Activated CD8-positive, alpha-beta memory T cell treated with anti-CD3 and anti-CD28 coated beads, Interleukin-2, amount 10 ng/mL, durations not matched to agents 7 days and 5 days (primary cell): ENCODE measurements at regions of chr14 and their contacts with region 1.

Region 1: DNA sequence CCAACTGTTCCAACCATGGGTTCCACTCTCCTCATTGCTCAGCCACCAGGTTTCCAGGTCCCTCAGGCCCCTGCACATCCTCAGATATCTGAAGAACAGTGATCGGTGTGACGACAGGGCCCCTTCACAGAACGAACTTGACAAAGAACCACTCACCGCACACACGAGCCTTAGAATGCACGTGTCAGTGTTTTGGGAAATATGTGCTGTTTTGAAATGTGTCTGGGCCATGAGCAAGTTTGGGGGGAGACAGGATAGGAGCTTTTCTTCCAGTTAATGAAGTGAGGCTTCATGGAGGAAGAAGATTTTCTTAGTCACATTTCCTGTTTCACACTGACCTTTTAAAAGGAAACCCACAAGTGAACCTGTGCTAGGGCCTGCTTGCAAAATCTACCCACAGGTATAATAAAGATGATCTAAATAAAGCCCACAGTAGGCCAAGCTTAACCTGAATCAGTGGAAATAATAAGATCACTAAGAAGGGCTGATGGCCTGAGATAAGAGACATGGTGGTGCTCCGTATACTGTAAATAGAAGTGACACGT is 58.6 kb downstream of the ZFP36L1 start:
- DNase-seq: peak; percentile 69
- ATAC-seq: peak; percentile 81
- H3K4me3 Mint-ChIP-seq: no peak overlapping the region
- H3K27ac Mint-ChIP-seq: peak overlapping the region; percentile 81
- H3K4me1 Mint-ChIP-seq: peaks cover 31% of the 10 kb centered on the region
- H3K27me3 Mint-ChIP-seq: no peaks in the 10 kb centered on the region

Region 2: DNA sequence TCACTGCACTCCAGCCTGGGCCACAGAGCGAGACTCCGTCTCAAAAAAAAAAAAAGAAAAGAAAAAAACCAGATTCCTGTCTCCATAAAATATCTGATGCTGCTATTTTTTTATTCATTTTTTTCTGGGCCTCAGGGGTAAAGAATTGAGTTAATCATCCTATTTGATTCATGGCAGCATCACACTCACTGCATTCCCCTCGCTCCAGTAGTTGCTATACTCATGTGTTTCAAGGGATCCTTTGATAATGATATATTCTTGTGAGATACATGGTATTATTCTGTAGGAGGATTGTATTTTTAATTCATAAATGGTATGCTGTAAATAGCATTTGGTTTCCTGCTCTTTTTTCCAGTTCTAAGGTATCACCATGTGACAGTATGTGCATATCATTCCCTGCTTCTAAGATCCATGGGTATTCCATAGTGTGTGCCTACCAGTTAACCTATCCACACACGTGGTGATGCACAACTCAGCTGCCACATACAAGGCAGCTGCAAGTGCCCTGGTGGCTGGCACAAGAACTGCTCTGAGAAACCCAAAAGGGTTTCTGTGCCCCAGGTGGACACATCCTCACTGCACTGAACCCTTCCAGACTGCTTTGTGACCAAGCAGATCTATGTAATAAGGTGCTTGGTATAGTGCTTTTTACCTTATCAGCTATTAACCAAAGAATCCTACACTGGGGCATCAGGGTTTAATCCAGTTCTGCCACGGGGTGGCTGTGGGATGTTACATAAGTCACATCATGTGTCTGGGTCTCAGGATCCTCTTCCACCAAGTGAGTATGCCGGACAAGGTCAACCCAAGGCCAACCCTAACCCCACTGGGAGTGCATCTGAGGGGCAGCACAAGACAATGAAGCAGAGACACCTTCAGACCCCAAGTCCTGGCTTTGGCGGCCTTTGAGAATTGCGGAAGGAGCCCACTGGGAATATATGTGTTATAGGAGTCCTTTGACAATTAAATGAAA is 16.0 kb before region 1 on chr14:
- CTCF ChIA-PET with region 1: interaction called, 13 read pairs
- DNase-seq: no peak
- ATAC-seq: no peak
- H3K4me3 Mint-ChIP-seq: no peak overlapping the region
- H3K27ac Mint-ChIP-seq: no peak overlapping the region
- H3K4me1 Mint-ChIP-seq: peaks cover 20% of the 10 kb centered on the region
- H3K27me3 Mint-ChIP-seq: peaks cover 6% of the 10 kb centered on the region

Region 3: DNA sequence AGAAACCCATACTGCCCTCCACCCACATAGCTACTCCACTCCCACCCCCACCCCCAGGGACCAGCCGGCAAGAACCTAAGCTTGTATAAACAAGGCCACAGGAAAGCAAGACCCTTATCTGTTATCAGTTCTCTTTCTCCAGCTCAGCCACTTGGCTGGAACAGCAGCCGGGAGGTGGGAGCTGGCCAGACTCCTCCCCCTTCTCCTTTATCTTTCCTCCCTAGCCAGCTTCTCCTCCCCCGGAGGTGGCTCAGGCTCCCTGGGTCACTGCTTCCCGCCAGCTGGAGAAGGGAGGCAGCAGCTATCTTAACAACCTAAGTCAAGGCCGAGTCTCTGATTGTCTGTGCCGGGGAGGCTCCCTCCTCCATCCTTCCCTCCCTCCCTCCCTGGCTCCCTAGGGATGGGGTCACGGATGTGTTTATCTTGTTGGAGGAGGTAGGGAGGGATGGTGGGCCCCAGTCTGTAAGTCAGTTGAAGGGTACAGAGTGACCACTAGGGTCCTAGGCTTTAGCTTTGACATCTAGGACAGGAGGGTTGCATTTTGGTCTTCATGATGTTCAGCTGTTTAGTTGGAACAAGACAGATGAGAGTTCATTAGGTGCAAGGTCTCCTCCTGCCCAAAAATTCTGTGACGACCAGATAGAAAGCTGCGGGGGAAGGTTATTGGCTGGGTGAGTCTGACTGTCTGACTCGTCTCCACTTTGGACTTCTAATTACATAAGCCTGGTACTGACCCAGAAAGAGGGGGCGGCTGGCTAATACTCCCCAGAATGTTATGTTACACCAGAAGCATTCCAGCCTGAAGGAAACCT is 28.9 kb after region 1 on chr14:
- CTCF ChIA-PET with region 1: no interaction called
- DNase-seq: no peak
- ATAC-seq: no peak
- H3K4me3 Mint-ChIP-seq: no peak overlapping the region
- H3K27ac Mint-ChIP-seq: no peak overlapping the region
- H3K4me1 Mint-ChIP-seq: peaks cover 9% of the 10 kb centered on the region
- H3K27me3 Mint-ChIP-seq: no peaks in the 10 kb centered on the region